ENCODE measurements at regions of chr1 and their contacts with region 1.

Region 1: DNA sequence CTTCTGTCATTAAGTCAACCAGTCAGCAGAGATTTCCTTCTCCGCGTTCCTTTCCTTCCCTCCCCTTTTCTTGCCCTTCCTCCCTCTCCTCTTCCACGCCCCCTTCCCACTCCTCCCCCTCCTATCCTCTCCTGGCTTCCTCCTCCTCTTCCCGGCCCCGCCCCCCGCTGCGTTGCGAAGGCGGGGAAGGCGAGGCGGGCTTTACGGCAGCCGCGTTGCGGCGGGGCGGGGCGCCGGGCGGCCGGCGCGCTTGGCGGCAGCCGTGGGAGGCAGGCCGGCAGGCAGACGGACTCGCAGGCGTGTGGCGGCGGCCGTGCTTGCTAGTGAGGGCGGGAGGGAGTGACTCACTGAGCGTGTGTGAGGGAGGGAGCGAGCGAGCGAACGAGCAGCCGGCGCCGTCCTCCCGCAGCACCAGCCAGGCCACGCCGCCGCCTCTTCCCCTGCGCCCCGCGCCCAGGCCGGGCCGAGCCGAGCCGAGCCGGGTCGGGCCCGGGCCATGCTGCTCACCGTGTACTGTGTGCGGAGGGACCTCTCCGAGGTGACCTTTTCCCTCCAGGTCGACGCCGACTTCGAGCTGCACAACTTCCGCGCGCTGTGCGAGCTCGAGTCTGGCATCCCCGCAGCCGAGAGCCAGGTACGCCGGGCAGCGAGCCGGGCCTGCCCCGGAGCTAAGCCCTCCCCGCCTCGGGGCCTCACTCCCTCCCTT is at the start of gene DDI2:
- H3K4me3 ChIP-seq: peak within 1 kb of the TSS; percentile 59
- H3K27ac ChIP-seq: peak within 1 kb of the TSS; percentile 94
- H3K4me1 ChIP-seq: peaks cover 11% of the 10 kb centered on the region; the same call in 1 of the 2 replicates
- CTCF ChIP-seq: no peak

Region 2: GRCh38 chr1:15341634-15342407 is 275.5 kb before region 1 on chr1:
- CTCF ChIA-PET with region 1: interaction called, 11 read pairs
- POLR2A ChIA-PET with region 1: no interaction called
- H3K4me3 ChIP-seq: no peak overlapping the region
- H3K27ac ChIP-seq: no peak overlapping the region
- H3K4me1 ChIP-seq: no peaks in the 10 kb centered on the region
- CTCF ChIP-seq: no peak

Region 3: DNA sequence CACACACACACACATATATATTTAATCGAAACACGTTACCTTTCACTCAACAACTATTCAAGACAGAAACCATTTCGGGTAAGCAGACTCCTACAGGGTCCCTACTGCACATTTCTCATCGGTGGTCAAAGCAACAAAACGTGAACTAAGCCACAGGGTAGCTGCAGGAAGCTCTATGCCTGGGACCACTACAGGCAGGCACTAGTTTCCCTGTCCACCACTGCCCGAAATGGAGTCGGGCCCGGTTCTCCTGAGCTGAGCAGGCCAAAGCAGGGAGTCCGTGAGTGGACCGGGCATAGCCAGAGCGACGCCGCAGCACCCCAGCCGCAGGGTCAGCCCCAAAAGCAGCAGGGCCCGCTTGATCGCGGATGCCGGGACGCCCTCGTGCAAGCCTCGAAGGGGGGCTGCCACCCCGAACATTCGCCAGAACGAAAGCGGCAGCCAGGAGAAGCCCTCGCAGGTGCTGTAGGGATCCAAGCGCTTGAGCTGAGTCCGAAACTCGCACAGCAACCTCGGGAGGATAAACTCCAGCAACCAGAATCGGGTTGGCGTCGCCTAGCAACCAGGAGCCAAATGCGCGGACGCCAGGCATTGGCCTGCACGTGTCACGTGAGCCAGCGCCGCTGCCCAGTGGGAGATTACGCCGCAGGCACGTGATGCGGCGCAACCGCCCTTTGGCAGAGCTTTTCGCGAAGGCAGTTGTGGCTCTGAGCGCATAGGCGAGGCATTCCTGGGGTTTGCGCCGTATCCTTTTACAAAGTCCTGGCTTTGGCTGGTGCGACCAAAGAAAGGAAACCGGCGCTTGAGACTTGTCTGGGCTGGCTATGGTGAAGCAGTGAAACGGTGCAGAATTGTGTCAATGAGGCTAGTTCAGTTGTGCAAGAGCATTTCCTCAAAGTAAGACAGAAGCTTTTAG is 14.0 kb before region 1 on chr1:
- CTCF ChIA-PET with region 1: no interaction called
- POLR2A ChIA-PET with region 1: interaction called, 23 read pairs
- H3K4me3 ChIP-seq: peak overlapping the region; percentile 66
- H3K27ac ChIP-seq: peak overlapping the region; percentile 55; the same call in 1 of the 2 replicates
- H3K4me1 ChIP-seq: no peaks in the 10 kb centered on the region
- CTCF ChIP-seq: no peak

Region 4: DNA sequence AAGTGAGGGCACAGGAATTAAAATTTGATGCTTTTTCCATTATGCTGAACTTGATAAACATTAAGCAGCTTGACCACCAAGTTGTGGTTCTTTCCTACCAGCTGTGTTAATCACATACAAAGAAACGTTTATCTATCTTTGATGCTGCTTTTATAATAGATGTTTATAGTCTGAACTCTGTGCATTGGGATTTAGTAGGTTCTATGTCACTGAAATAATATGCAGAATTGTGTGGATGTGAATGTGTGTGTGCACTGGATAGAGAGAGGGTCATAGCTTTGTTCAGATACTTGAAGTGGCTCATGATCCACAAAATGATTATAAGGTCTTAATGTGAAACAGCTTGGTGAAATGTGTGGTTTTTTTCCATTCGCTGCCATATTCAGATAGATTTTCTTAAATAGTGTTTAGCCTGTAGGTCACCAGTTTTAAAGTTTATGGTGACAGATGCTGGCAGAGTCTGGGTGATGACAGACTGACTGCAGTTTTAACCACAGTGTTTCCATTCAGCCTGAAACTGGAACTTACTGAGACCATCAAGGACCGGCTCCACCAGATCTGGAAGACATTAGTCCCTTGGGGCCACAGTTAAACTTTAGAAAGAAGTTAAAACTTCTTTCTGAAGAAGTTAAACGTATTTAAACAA is 10.1 kb after region 1 on chr1:
- CTCF ChIA-PET with region 1: no interaction called
- POLR2A ChIA-PET with region 1: no interaction called
- H3K4me3 ChIP-seq: no peak overlapping the region
- H3K27ac ChIP-seq: no peak overlapping the region
- H3K4me1 ChIP-seq: peaks cover 12% of the 10 kb centered on the region
- CTCF ChIP-seq: no peak

Region 5: DNA sequence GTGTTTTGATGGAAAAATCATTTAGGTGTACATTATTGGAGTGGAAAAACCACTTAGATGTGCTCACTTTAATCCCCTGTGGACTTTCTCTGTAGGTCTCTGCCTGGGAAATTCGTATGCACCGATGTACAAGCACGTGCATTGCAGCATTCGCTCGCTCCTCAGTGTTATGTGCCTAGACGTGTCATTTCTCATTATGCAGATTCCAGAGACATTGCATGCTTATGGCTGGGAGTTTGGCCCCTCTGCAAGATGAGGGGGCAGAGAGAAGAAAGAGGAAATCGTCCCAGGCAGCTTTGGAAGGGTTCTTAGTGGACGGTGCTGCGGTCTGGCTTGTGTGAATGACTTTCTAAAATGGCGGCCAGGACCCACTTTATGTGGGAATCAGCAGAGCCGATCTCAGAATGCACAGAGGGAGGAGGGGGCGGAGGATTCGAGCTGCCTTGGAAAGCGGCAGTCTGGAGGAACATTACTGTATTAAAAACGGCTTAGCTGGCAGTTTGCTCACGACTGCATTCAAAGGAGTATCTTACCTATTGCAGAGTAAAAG is 232.5 kb after region 1 on chr1:
- CTCF ChIA-PET with region 1: no interaction called
- POLR2A ChIA-PET with region 1: no interaction called
- H3K4me3 ChIP-seq: peak overlapping the region; percentile 87
- H3K27ac ChIP-seq: peak overlapping the region; percentile 98
- H3K4me1 ChIP-seq: peaks cover 17% of the 10 kb centered on the region
- CTCF ChIP-seq: no peak

Measured in HEK293 (cell line).